AG04449 (cell line): ENCODE measurements at regions of chr3 and their contacts with region 1.

Region 1: DNA sequence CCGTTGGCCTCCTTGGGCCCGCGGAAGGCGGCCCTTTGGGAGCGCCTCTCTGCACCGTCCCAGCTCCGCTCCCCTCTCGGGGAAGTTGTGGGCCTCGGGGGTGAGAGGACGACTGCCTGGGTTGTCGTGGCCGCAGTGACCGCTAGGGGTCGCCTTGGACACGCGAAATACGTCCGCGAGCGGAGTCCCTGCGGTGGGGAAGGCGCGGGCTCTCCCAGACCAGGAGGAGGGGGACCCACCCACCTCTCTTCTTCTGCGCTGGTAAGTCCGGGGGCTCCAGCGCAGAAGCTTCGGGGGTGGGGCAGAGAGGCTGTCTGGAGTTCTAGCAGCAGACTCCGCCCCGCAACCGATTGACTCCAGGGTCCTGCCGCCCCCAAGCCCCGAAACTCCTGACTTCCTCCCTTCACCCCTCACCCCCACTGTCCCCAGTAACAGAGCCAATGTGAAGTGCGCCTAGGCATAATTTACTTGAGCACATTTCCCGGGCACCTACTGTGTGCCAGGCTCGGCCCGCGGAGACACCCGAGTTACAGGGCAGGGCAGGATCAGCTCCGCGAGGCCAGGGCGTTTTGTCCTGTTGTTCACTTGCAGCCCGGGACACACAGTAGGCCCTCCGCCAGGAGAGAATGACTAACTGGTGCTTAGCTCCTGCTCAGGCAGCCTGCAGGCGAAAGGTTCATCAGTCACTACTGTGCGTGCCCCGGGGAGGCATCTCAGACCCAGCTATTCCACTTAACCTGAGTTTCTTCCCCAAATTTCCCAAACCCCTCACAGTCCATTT is 32.8 kb downstream of the DNASE1L3 start:
- DNase-seq: no peak
- H3K4me3 ChIP-seq: peak overlapping the region; percentile 52
- CTCF ChIP-seq: peak; percentile 96

Region 2: DNA sequence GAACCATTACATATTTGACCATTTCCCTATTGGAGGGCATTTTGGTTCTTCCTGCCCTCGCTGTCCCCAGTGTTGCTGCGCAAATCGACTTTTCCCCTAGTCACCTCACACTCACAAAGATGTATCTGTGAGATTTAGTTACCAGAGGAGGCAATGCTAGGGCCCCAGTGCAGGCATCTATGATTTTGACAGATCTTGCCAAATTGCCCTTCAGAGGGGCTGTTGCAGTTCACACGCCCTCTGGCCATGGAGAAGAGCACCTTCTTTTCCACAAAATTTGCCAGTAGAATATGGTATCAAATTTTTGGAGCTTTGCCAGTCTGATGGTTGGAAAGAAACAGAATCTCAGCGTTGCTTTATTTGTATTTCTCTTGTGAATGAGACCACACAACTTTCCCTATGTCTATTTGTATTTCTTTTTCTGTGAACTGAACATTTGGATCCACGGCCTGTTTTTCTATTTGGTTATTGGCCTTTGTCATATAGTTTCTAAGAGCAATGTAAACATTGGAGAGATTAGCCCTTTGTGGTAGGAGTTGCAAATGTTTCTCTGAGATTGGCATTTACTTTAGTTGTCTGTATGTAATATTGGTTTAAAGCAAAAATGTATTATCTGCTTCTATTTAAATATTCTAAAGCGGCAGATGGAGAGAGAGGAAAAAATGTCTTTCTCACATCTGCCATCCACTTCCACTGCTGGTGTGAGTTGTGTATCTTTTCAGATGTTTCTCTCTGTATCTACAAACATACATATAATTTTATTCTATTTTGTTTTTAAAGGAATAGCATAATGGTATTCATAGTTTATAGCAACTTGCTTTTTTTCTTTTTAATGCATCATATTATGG is 33.2 kb before region 1 on chr3:
- CTCF ChIA-PET with region 1: no interaction called
- POLR2A ChIA-PET with region 1: no interaction called
- DNase-seq: no peak
- H3K4me3 ChIP-seq: no peak overlapping the region
- CTCF ChIP-seq: no peak

Region 3: DNA sequence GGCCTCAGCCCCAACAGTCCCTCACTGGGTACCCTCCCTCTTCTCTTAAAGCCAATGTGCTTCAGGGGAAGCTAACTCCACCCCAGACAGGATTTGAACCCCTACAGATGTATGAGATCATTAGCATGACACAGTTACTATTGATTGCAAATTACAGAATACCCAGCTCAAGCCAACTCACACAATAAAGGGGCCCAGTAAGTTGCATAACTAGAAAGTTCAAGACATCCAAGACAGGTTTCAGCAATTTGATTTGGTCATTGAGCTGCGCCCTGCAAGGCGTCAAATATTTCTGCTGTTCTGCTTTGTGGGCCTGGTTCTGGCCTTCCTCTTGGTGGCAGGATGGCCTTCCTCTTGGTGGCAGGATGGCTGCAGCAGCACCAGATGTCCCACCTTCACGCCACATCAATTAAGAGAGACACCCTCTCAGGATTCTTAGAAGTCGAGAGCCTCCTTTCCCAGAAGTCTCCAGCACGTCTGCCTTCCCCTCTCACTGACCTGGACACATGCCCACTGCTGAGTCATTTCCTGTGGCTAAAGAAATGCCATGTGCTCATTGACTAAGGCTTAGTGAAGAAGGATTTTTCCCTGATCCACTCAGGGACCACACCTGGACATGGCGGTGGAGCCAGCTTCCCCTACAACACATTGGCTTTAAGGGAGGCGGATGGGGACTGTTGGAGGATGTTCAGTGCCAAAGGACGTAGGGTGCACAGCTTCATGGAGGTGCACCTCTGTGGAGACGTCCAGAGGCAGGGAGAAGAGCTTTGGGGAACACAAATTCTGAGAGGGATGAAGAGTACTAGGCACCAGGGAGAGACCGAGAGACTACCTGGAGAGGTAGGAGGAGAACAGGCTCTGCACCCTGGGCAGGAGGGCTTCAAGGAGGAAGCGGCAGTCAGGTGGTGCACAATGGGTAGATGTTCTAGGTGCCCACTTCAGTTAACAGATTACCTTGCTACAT is 16.2 kb before region 1 on chr3:
- CTCF ChIA-PET with region 1: interaction called, 116 read pairs
- POLR2A ChIA-PET with region 1: no interaction called
- DNase-seq: peak; percentile 70
- H3K4me3 ChIP-seq: no peak overlapping the region
- CTCF ChIP-seq: no peak

Region 4: GRCh38 chr3:58188173-58188564 is 10.2 kb after region 1 on chr3:
- CTCF ChIA-PET with region 1: interaction called, 143 read pairs
- POLR2A ChIA-PET with region 1: interaction called, 5 read pairs
- DNase-seq: no peak
- H3K4me3 ChIP-seq: no peak overlapping the region
- CTCF ChIP-seq: no peak

Region 5: GRCh38 chr3:58223855-58224254 is 45.9 kb after region 1 on chr3:
- CTCF ChIA-PET with region 1: interaction called, 196 read pairs
- POLR2A ChIA-PET with region 1: no interaction called
- DNase-seq: no peak
- H3K4me3 ChIP-seq: no peak overlapping the region
- CTCF ChIP-seq: no peak

Region 6: GRCh38 chr3:58630076-58630709 is 452.3 kb after region 1 on chr3:
- CTCF ChIA-PET with region 1: no interaction called
- POLR2A ChIA-PET with region 1: no interaction called
- DNase-seq: no peak
- H3K4me3 ChIP-seq: no peak overlapping the region
- CTCF ChIP-seq: peak; percentile 79